ENCODE measurements at regions of chr2 and their contacts with region 1.

Region 1: GRCh38 chr2:64730551-64731262 is 77.0 kb upstream of the SERTAD2 start:
- DNase-seq: peak; percentile 54
- ATAC-seq: peak; percentile 68
- H3K4me3 Mint-ChIP-seq: peak overlapping the region; percentile 74
- H3K27ac Mint-ChIP-seq: peak overlapping the region; percentile 96
- H3K4me1 Mint-ChIP-seq: peaks cover 61% of the 10 kb centered on the region
- H3K27me3 Mint-ChIP-seq: no peaks in the 10 kb centered on the region

Region 2: GRCh38 chr2:64260817-64261216 is 469.9 kb before region 1 on chr2:
- CTCF ChIA-PET with region 1: no interaction called
- POLR2A ChIA-PET with region 1: no interaction called
- intact Hi-C with region 1: no loop called
- DNase-seq: peak; percentile 22
- ATAC-seq: peak; percentile 57
- H3K4me3 Mint-ChIP-seq: peak overlapping the region; percentile 35
- H3K27ac Mint-ChIP-seq: peak overlapping the region; percentile 84
- H3K4me1 Mint-ChIP-seq: peaks cover 8% of the 10 kb centered on the region
- H3K27me3 Mint-ChIP-seq: no peaks in the 10 kb centered on the region

Region 3: DNA sequence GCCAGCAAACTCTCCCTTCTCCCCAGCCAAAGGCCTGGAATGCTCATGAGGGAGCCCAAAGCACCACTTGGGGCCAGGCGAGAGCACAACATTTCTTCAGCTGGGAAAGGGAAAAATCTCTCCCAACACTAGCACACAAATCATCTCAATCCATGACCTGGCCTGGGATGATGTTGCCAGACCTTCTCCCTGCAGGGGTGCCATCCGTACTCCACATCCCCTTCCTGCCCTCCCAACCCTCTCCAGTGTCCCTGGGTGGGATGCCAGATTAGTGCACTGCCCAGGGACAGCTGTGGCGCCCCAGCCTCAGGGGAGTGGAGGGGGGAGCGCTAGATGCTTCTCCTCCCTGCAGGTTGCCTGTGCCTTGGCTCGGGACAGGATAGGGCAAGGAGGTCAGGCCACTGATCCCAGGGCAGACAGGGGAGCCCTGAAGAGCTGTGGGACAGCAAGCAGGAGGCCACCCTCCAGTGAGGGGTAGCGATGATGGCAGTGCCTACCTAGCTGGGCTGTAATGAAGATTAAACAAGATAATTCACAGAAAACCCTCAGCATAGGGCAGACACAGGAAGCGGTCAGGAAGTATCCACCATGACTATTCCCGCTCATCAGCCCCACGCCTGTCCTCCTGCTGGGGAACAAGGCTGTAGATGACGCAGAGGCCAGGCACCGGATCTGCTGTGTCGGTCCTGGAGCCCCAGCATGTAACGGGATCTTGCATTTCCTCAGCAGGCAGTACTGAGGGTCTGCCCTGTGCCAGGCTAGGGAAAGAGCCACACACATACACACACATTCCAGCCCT is 108.1 kb before region 1 on chr2:
- CTCF ChIA-PET with region 1: no interaction called
- POLR2A ChIA-PET with region 1: no interaction called
- intact Hi-C with region 1: no loop called
- DNase-seq: no peak
- ATAC-seq: no peak
- H3K4me3 Mint-ChIP-seq: no peak overlapping the region
- H3K27ac Mint-ChIP-seq: no peak overlapping the region
- H3K4me1 Mint-ChIP-seq: no peaks in the 10 kb centered on the region
- H3K27me3 Mint-ChIP-seq: no peaks in the 10 kb centered on the region

Region 4: DNA sequence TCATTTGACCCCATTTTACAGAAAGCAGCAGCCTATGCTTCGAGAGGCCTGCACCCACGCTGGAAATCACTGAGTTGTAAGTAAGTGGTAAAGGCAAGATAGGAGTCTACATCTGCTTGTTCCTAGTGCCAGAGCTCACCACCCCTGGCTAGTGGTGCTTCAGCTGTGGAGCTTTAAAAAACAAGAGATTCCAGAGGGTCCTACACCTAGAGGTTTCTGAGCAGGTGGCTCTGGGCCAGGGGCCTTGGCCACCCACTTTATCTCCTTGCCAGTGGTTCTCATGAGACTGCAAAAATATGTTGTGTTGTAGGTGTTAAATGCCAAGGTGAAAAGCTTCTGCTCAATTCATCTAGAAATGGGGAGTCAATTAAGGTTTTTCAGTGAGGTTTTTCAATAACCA is 17.0 kb before region 1 on chr2:
- CTCF ChIA-PET with region 1: interaction called, 16 read pairs
- POLR2A ChIA-PET with region 1: no interaction called
- intact Hi-C with region 1: no loop called
- DNase-seq: no peak
- ATAC-seq: no peak
- H3K4me3 Mint-ChIP-seq: no peak overlapping the region
- H3K27ac Mint-ChIP-seq: no peak overlapping the region
- H3K4me1 Mint-ChIP-seq: peaks cover 19% of the 10 kb centered on the region
- H3K27me3 Mint-ChIP-seq: no peaks in the 10 kb centered on the region

Region 5: DNA sequence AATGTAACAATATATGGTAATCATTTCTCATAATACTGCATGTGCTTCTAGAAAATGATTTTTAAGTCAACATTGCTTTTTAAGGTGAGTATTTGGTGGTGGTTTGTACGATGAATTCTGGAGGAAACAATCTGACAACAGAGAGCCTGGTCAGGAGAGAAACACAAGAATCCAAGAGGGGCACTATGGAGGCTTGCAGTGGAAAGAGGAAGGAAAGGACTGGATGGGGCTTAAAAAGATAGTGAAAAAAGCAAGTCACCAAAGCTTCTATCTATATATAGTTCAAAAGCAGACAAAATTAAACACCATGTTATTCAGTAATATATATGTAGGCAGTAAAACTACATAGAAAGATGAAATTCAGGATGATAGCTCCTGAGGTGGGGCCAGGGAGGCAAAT is 32.4 kb after region 1 on chr2:
- CTCF ChIA-PET with region 1: no interaction called
- POLR2A ChIA-PET with region 1: no interaction called
- intact Hi-C with region 1: no loop called
- DNase-seq: no peak
- ATAC-seq: no peak
- H3K4me3 Mint-ChIP-seq: no peak overlapping the region
- H3K27ac Mint-ChIP-seq: no peak overlapping the region
- H3K4me1 Mint-ChIP-seq: peaks cover 24% of the 10 kb centered on the region
- H3K27me3 Mint-ChIP-seq: no peaks in the 10 kb centered on the region

Measured in activated CD4-positive, alpha-beta T cell treated with anti-CD3 and anti-CD28 coated beads for 36 hours (primary cell).